ENCODE measurements at regions of chr1 and their contacts with region 1.

Region 1: GRCh38 chr1:166489670-166490436 is 323.1 kb upstream of the FAM78B start:
- DNase-seq: peak; percentile 63
- ATAC-seq: peak; percentile 81
- H3K4me3 Mint-ChIP-seq: no peak overlapping the region
- H3K27ac Mint-ChIP-seq: no peak overlapping the region
- H3K4me1 Mint-ChIP-seq: peaks cover 6% of the 10 kb centered on the region
- H3K27me3 Mint-ChIP-seq: no peaks in the 10 kb centered on the region

Region 2: GRCh38 chr1:165392634-165393571 is 1097.0 kb before region 1 on chr1:
- CTCF ChIA-PET with region 1: interaction called, 5 read pairs
- POLR2A ChIA-PET with region 1: no interaction called
- intact Hi-C with region 1: loop called in 1 of 2 experiments (anchors 5 kb)
- DNase-seq: peak; percentile 93
- ATAC-seq: peak; percentile 95
- H3K4me3 Mint-ChIP-seq: peak overlapping the region; percentile 62
- H3K27ac Mint-ChIP-seq: peak overlapping the region; percentile 43
- H3K4me1 Mint-ChIP-seq: peaks cover 15% of the 10 kb centered on the region
- H3K27me3 Mint-ChIP-seq: peaks cover 67% of the 10 kb centered on the region

Region 3: GRCh38 chr1:165697881-165698760 is 791.7 kb before region 1 on chr1 and contains the start of gene ALDH9A1:
- CTCF ChIA-PET with region 1: no interaction called
- POLR2A ChIA-PET with region 1: no interaction called
- intact Hi-C with region 1: loop called in 1 of 2 experiments (anchors 5 kb)
- DNase-seq: peak; percentile 90
- ATAC-seq: peak; percentile 91
- H3K4me3 Mint-ChIP-seq: peak within 1 kb of the TSS; percentile 99
- H3K27ac Mint-ChIP-seq: peak within 1 kb of the TSS; percentile 99
- H3K4me1 Mint-ChIP-seq: peaks cover 33% of the 10 kb centered on the region
- H3K27me3 Mint-ChIP-seq: no peaks in the 10 kb centered on the region
- total RNA-seq, gene ALDH9A1: 29.0 to 37.6 TPM

Region 4: GRCh38 chr1:165827268-165828102 is 662.4 kb before region 1 on chr1 and contains the start of gene UCK2:
- CTCF ChIA-PET with region 1: no interaction called
- POLR2A ChIA-PET with region 1: no interaction called
- intact Hi-C with region 1: loop called in 1 of 2 experiments (anchors 5 kb)
- DNase-seq: peak; percentile 83
- ATAC-seq: peak; percentile 76
- H3K4me3 Mint-ChIP-seq: peak within 1 kb of the TSS; percentile 96
- H3K27ac Mint-ChIP-seq: peak within 1 kb of the TSS; percentile 92
- H3K4me1 Mint-ChIP-seq: peaks cover 13% of the 10 kb centered on the region
- H3K27me3 Mint-ChIP-seq: no peaks in the 10 kb centered on the region
- total RNA-seq, gene UCK2: 69.4 to 81.5 TPM

Region 5: DNA sequence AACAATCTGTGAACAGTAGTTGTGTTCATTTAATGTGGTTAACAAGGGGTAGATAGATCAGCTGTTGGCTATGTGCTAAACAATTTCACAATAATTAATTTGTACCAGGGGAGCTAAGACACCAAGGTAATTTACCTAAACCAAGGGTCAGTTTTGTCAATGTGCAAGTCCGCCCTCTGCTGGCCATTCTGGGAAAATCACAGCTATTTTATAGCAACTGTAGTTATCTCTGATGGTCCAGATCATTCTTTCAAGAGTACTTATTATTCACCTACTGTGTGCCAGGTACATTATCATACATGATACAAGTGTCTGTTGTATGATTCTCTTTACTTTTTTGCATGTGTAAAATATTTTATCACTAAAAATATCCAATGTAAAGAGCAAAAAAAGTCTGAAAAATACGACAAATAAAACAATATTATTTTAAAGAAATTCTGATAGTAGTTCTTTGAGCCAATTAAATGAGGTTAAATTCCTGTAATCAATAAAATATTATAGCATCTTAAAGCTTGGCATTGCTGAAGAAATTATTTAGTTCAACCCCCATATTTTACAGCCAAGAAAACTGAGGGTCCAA is 10.7 kb before region 1 on chr1:
- CTCF ChIA-PET with region 1: interaction called, 36 read pairs
- POLR2A ChIA-PET with region 1: no interaction called
- intact Hi-C with region 1: no loop called
- DNase-seq: peak; percentile 70
- ATAC-seq: no peak
- H3K4me3 Mint-ChIP-seq: no peak overlapping the region
- H3K27ac Mint-ChIP-seq: no peak overlapping the region
- H3K4me1 Mint-ChIP-seq: no peaks in the 10 kb centered on the region
- H3K27me3 Mint-ChIP-seq: no peaks in the 10 kb centered on the region

Region 6: GRCh38 chr1:166538646-166539045 is 48.8 kb after region 1 on chr1:
- CTCF ChIA-PET with region 1: no interaction called
- POLR2A ChIA-PET with region 1: no interaction called
- intact Hi-C with region 1: no loop called
- DNase-seq: no peak
- ATAC-seq: no peak
- H3K4me3 Mint-ChIP-seq: no peak overlapping the region
- H3K27ac Mint-ChIP-seq: no peak overlapping the region
- H3K4me1 Mint-ChIP-seq: no peaks in the 10 kb centered on the region
- H3K27me3 Mint-ChIP-seq: peaks cover 4% of the 10 kb centered on the region

Region 7: GRCh38 chr1:166875734-166876539 is 386.1 kb after region 1 on chr1 and contains the start of gene TADA1:
- CTCF ChIA-PET with region 1: no interaction called
- POLR2A ChIA-PET with region 1: no interaction called
- intact Hi-C with region 1: loop called in 1 of 2 experiments (anchors 1 kb)
- DNase-seq: peak; percentile 100
- ATAC-seq: peak; percentile 91
- H3K4me3 Mint-ChIP-seq: peak within 1 kb of the TSS; percentile 92
- H3K27ac Mint-ChIP-seq: peak within 1 kb of the TSS; percentile 97
- H3K4me1 Mint-ChIP-seq: peaks cover 45% of the 10 kb centered on the region
- H3K27me3 Mint-ChIP-seq: no peaks in the 10 kb centered on the region
- total RNA-seq, gene TADA1: 16.0 to 19.5 TPM

Region 8: GRCh38 chr1:167043752-167044488 is 554.1 kb after region 1 on chr1:
- CTCF ChIA-PET with region 1: no interaction called
- POLR2A ChIA-PET with region 1: no interaction called
- intact Hi-C with region 1: loop called in 1 of 2 experiments (anchors 10 kb)
- DNase-seq: peak; percentile 89
- ATAC-seq: peak; percentile 99
- H3K4me3 Mint-ChIP-seq: peak overlapping the region; percentile 72
- H3K27ac Mint-ChIP-seq: peak overlapping the region; percentile 83
- H3K4me1 Mint-ChIP-seq: peaks cover 18% of the 10 kb centered on the region
- H3K27me3 Mint-ChIP-seq: peaks cover 7% of the 10 kb centered on the region